ENCODE measurements at regions of chr1 and their contacts with region 1.

Region 1: DNA sequence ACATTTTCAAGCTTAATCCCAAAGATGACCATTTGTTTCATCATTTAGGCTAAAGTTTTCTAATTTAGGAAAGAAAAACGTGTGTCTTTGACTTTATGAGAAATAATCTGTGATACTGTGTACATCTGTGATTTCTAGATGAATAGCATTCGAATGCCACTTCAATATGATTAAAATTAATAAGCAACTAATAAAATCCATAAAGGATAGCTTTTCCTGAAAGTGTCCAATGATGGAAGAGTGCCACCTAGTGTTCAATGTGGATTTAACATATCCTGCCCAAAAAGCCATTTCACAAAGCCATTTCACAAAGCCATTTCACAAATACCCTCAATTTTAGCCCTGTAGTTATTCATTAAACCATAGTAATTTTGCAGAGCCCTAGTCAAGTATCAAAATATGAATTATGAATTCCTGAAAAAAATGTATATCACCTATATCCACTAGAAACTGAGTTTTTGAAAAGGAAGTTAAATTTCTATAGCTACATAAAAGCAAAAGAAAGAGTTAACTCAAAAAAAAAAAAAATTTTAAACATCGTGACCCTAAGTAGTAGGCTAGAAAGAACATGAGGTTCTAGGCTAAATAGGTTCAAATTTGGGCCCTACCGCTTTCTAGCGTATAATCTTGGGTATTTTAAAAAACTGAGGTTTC is 19.1 kb downstream of the NME7 start:
- DNase-seq: no peak
- H3K4me3 Mint-ChIP-seq: no peak overlapping the region
- H3K27ac Mint-ChIP-seq: no peak overlapping the region
- H3K4me1 Mint-ChIP-seq: peaks cover 17% of the 10 kb centered on the region
- H3K27me3 Mint-ChIP-seq: peaks cover 2% of the 10 kb centered on the region

Region 2: GRCh38 chr1:168734946-168735345 is 613.6 kb before region 1 on chr1:
- intact Hi-C with region 1: loop called (anchors 10 kb)
- DNase-seq: no peak
- H3K4me3 Mint-ChIP-seq: no peak overlapping the region
- H3K27ac Mint-ChIP-seq: no peak overlapping the region
- H3K4me1 Mint-ChIP-seq: no peaks in the 10 kb centered on the region
- H3K27me3 Mint-ChIP-seq: peaks cover 2% of the 10 kb centered on the region

Region 3: GRCh38 chr1:169091480-169091941 is 257.0 kb before region 1 on chr1:
- intact Hi-C with region 1: loop called (anchors 1 kb)
- DNase-seq: no peak
- H3K4me3 Mint-ChIP-seq: no peak overlapping the region
- H3K27ac Mint-ChIP-seq: no peak overlapping the region
- H3K4me1 Mint-ChIP-seq: peaks cover 12% of the 10 kb centered on the region
- H3K27me3 Mint-ChIP-seq: peaks cover 6% of the 10 kb centered on the region